GM12878 (cell line): ENCODE measurements at regions of chr17 and their contacts with region 1.

Region 1: DNA sequence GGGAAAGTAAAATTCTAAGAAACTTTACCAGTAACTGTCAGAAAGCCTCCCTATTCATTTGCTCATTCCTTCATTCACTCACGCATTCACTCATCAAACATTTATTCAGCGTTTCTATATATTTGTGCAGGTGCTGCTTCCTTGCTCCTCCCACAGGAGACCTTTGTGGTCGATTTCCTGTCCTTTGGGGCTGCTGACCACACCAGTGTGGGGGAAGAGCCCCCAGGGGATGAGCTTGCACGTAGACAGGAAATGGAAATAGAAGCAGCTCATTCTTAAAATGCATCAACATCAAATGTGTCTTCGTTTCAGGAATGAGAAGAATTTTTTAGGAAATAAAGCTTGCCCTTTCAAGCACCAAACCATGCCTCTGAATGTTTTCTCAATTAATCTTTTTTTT is 9.6 kb downstream of the PIK3R6 start:
- DNase-seq: peak; percentile 95
- ATAC-seq: peak; percentile 40
- H3K4me3 ChIP-seq: peak overlapping the region; percentile 57; the same call in 1 of the 2 replicates
- H3K27ac ChIP-seq: peak overlapping the region; percentile 99
- H3K4me1 ChIP-seq: peaks cover 60% of the 10 kb centered on the region
- H3K27me3 ChIP-seq: no peaks in the 10 kb centered on the region
- CTCF ChIP-seq: no peak
- EP300 ChIP-seq: peak; percentile 98 to 99
- POLR2A ChIP-seq: no peak
- RAD21 ChIP-seq: peak; percentile 12; the same call in 1 of the 2 replicates

Region 2: GRCh38 chr17:7947651-7948050 is 910.3 kb before region 1 on chr17:
- CTCF ChIA-PET with region 1: no interaction called
- POLR2A ChIA-PET with region 1: no interaction called
- RAD21 ChIA-PET with region 1: no interaction called
- SMC1A ChIA-PET with region 1: no interaction called
- in situ Hi-C with region 1: no loop called
- intact Hi-C with region 1: no loop called
- DNase-seq: no peak
- ATAC-seq: no peak
- H3K4me3 ChIP-seq: no peak overlapping the region
- H3K27ac ChIP-seq: no peak overlapping the region
- H3K4me1 ChIP-seq: peaks cover 12% of the 10 kb centered on the region
- H3K27me3 ChIP-seq: no peaks in the 10 kb centered on the region
- CTCF ChIP-seq: no peak
- EP300 ChIP-seq: no peak
- POLR2A ChIP-seq: no peak
- RAD21 ChIP-seq: no peak

Region 3: GRCh38 chr17:8766731-8767130 is 91.2 kb before region 1 on chr17:
- CTCF ChIA-PET with region 1: no interaction called
- POLR2A ChIA-PET with region 1: no interaction called
- RAD21 ChIA-PET with region 1: no interaction called
- SMC1A ChIA-PET with region 1: no interaction called
- in situ Hi-C with region 1: no loop called
- intact Hi-C with region 1: no loop called
- DNase-seq: no peak
- ATAC-seq: no peak
- H3K4me3 ChIP-seq: no peak overlapping the region
- H3K27ac ChIP-seq: no peak overlapping the region
- H3K4me1 ChIP-seq: no peaks in the 10 kb centered on the region
- H3K27me3 ChIP-seq: no peaks in the 10 kb centered on the region; a peak in 1 of 4 replicates
- CTCF ChIP-seq: no peak
- EP300 ChIP-seq: no peak
- POLR2A ChIP-seq: no peak
- RAD21 ChIP-seq: no peak

Region 4: GRCh38 chr17:8846768-8847211 is 11.1 kb before region 1 on chr17:
- CTCF ChIA-PET with region 1: interaction called, 5 read pairs
- POLR2A ChIA-PET with region 1: interaction called, 15 read pairs
- RAD21 ChIA-PET with region 1: interaction called, 18 read pairs
- SMC1A ChIA-PET with region 1: interaction called, 12 read pairs
- in situ Hi-C with region 1: no loop called
- intact Hi-C with region 1: no loop called
- DNase-seq: no peak
- ATAC-seq: peak; percentile 65
- H3K4me3 ChIP-seq: no peak overlapping the region
- H3K27ac ChIP-seq: peak overlapping the region; percentile 42
- H3K4me1 ChIP-seq: peaks cover 42% of the 10 kb centered on the region
- H3K27me3 ChIP-seq: no peaks in the 10 kb centered on the region
- CTCF ChIP-seq: no peak
- EP300 ChIP-seq: no peak
- POLR2A ChIP-seq: no peak
- RAD21 ChIP-seq: no peak

Region 5: GRCh38 chr17:8960325-8961140 is 102.6 kb after region 1 on chr17:
- CTCF ChIA-PET with region 1: interaction called, 5 read pairs
- POLR2A ChIA-PET with region 1: interaction called, 10 read pairs
- RAD21 ChIA-PET with region 1: interaction called, 21 read pairs
- SMC1A ChIA-PET with region 1: interaction called, 5 read pairs
- in situ Hi-C with region 1: loop called (anchors 5 kb)
- intact Hi-C with region 1: loop called (anchors 5 kb)
- DNase-seq: no peak
- ATAC-seq: peak; percentile 10
- H3K4me3 ChIP-seq: peak overlapping the region; percentile 57; the same call in 1 of the 2 replicates
- H3K27ac ChIP-seq: peak overlapping the region; percentile 81
- H3K4me1 ChIP-seq: peaks cover 61% of the 10 kb centered on the region
- H3K27me3 ChIP-seq: no peaks in the 10 kb centered on the region
- CTCF ChIP-seq: no peak
- EP300 ChIP-seq: no peak
- POLR2A ChIP-seq: peak; percentile 38; the same call in 1 of the 2 replicates
- RAD21 ChIP-seq: no peak

Region 6: DNA sequence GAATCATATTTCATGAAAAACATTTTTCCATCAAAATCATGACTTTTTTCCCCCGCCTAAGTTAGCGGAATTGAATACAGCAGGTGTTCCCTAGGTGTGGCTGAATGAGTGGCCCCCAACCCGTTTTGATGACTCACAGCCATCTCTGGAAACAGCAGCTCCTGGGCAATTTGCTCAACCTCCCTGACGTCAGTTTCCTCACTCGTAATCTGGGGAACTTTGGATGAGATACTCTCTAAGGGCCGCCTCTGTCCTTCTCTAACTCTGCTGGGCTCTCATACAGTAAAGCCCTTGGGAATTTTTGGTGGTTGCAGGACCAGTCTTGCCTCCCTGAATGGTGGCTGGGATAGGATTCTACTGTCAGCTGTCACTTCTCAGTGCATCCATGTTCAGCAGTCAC is 151.8 kb after region 1 on chr17:
- CTCF ChIA-PET with region 1: no interaction called
- POLR2A ChIA-PET with region 1: no interaction called
- RAD21 ChIA-PET with region 1: no interaction called
- SMC1A ChIA-PET with region 1: no interaction called
- in situ Hi-C with region 1: no loop called
- intact Hi-C with region 1: no loop called
- DNase-seq: no peak
- ATAC-seq: no peak
- H3K4me3 ChIP-seq: no peak overlapping the region
- H3K27ac ChIP-seq: no peak overlapping the region
- H3K4me1 ChIP-seq: no peaks in the 10 kb centered on the region
- H3K27me3 ChIP-seq: peaks cover 2 to 3% of the 10 kb centered on the region in 2 experiments
- CTCF ChIP-seq: no peak
- EP300 ChIP-seq: no peak
- POLR2A ChIP-seq: no peak
- RAD21 ChIP-seq: no peak